SK-N-SH (cell line): ENCODE measurements at regions of chr9 and their contacts with region 1.

Region 1: DNA sequence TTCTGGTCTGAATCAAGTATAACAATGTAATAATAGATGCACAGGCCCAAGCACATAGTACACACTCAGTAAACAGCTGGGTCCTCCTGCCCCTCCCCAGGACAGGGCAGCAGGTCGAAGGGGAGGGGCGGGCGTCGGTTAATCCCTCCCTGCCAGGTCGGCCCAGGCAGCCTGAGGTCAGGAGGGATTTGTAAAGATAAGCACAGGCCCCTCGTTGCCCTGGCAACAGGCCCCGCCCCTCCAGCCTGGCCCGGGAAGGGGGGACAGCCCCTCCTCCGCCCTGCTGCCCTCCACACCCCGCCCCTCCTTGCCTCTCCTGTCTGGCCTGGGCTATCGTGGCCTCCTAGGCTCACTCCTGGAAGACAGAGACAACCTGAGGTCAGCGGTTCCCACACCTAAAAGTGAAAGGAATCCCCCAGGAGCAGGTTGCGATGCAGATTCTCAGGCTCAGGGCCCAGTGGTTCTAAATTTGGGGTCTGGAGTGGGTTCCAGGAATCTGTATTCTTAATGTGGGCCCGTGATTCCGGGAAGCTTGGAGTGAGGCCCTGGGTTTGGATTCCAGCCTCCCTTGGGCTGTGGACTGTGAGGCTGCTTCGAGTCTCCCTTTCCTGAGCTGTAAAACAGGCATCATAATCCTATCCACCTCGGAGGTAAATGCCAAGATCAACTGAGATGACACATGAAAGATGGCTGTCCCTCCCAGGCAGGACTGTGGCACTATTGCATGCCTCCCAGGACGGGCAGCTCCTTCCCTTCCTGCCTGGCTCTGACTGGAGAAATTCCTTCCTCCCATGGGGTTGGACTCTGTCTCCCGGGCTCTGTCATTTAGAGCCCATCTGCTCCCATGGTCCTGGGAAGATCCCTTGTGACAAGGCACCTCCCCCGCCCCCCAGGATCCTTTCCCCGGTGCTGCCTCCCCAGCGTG is 4.4 kb downstream of the CRB2 start:
- DNase-seq: peak; percentile 85
- H3K4me3 ChIP-seq: no peak overlapping the region
- H3K27ac ChIP-seq: no peak overlapping the region
- H3K4me1 ChIP-seq: peaks cover 0 to 4% of the 10 kb centered on the region in 2 experiments; a peak in 1 of 4 replicates
- H3K27me3 ChIP-seq: no peaks in the 10 kb centered on the region
- CTCF ChIP-seq: no peak
- EP300 ChIP-seq: no peak
- RAD21 ChIP-seq: no peak

Region 2: GRCh38 chr9:123382653-123383511 is 22.5 kb after region 1 on chr9:
- CTCF ChIA-PET with region 1: interaction called, 331 read pairs
- POLR2A ChIA-PET with region 1: no interaction called
- DNase-seq: no peak
- H3K4me3 ChIP-seq: no peak overlapping the region
- H3K27ac ChIP-seq: no peak overlapping the region
- H3K4me1 ChIP-seq: peaks cover 0 to 5% of the 10 kb centered on the region in 2 experiments; a peak in 1 of 4 replicates
- H3K27me3 ChIP-seq: no peaks in the 10 kb centered on the region
- CTCF ChIP-seq: no peak
- EP300 ChIP-seq: no peak
- RAD21 ChIP-seq: no peak